Posterior vena cava (tissue), 2 donors: ENCODE measurements at regions of chr12 and their contacts with region 1.

Region 1: GRCh38 chr12:52759695-52760094 is 17.4 kb downstream of the KRT76 start:
- DNase-seq: no peak

Region 2: GRCh38 chr12:51846911-51847642 is 912.6 kb before region 1 on chr12:
- intact Hi-C with region 1: loop called in 1 of 2 experiments (anchors 5 kb)
- DNase-seq: no peak

Region 3: GRCh38 chr12:52716061-52716460 is 43.6 kb before region 1 on chr12:
- intact Hi-C with region 1: loop called in 1 of 2 experiments (anchors 1 kb)
- DNase-seq: no peak

Region 4: DNA sequence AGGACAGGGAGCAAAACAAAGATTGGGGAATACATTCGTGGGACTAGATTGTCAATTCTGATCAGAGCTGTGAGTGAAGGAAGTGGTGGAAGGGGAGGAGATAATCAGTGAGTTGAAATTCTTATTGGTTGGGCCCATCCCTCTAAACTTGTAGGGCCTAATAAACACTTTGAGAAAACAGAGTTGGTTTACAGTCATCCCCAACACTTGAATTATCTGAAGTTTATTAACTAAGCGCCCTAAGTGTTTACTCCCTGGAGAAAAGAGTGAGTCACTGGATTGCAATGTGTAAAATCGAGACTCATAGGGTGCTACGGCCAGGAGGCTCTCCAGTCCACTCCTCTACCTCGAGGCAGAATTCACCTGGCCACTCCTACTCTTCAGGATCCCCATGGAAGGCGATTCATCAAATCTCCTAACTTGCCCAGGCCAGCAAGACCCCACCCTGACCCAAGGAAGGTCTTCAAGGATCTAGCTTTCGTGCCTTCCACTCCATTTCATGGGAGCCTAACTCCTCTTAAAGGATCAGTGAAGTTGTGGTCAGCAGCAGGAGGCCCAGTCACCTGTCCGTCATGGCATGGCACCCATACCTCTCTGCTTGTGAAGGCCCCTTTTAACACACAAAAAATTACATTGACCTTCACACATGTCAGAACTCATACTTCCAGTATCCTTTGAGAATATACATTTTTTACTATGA is 39.5 kb after region 1 on chr12:
- intact Hi-C with region 1: no loop called
- DNase-seq: no peak